ENCODE measurements at regions of chr11 and their contacts with region 1.

Region 1: GRCh38 chr11:86060544-86060943 is 8.3 kb downstream of the PICALM start:
- DNase-seq: no peak
- H3K4me3 ChIP-seq: no peak overlapping the region
- H3K27ac ChIP-seq: peak overlapping the region; percentile 2
- H3K4me1 ChIP-seq: peaks cover 53% of the 10 kb centered on the region
- H3K27me3 ChIP-seq: no peaks in the 10 kb centered on the region
- CTCF ChIP-seq: no peak

Region 2: GRCh38 chr11:86081455-86081854 is 20.9 kb after region 1 on chr11:
- CTCF ChIA-PET with region 1: no interaction called
- POLR2A ChIA-PET with region 1: no interaction called
- intact Hi-C with region 1: no loop called
- DNase-seq: no peak
- H3K4me3 ChIP-seq: no peak overlapping the region
- H3K27ac ChIP-seq: no peak overlapping the region
- H3K4me1 ChIP-seq: no peaks in the 10 kb centered on the region
- H3K27me3 ChIP-seq: no peaks in the 10 kb centered on the region
- CTCF ChIP-seq: no peak

Region 3: GRCh38 chr11:86091566-86091965 is 31.0 kb after region 1 on chr11:
- CTCF ChIA-PET with region 1: no interaction called
- POLR2A ChIA-PET with region 1: interaction called, 13 read pairs
- intact Hi-C with region 1: no loop called
- DNase-seq: no peak
- H3K4me3 ChIP-seq: no peak overlapping the region
- H3K27ac ChIP-seq: no peak overlapping the region
- H3K4me1 ChIP-seq: no peaks in the 10 kb centered on the region
- H3K27me3 ChIP-seq: no peaks in the 10 kb centered on the region
- CTCF ChIP-seq: no peak